SK-N-SH (cell line): ENCODE measurements at regions of chr9 and their contacts with region 1.

Region 1: GRCh38 chr9:34458013-34458958 is at the starts of genes DNAI1 and FAM219A:
- DNase-seq: peak; percentile 99
- H3K4me3 ChIP-seq: peak within 1 kb of the TSS; percentile 76 to 77
- H3K27ac ChIP-seq: peak within 1 kb of the TSS; percentile 61 to 82
- H3K4me1 ChIP-seq: peaks cover 20 to 21% of the 10 kb centered on the region in 2 experiments; a peak in 2 of 4 replicates
- H3K27me3 ChIP-seq: no peaks in the 10 kb centered on the region
- CTCF ChIP-seq: no peak
- EP300 ChIP-seq: no peak
- RAD21 ChIP-seq: no peak
- polyA plus RNA-seq, gene DNAI1: 0.46 and 0.55 TPM in 2 replicates
- polyA plus RNA-seq, gene FAM219A: 15.7 and 18.5 TPM in 2 replicates

Region 2: GRCh38 chr9:34271265-34272006 is 186.8 kb before region 1 on chr9:
- CTCF ChIA-PET with region 1: no interaction called
- POLR2A ChIA-PET with region 1: no interaction called
- DNase-seq: no peak
- H3K4me3 ChIP-seq: no peak overlapping the region
- H3K27ac ChIP-seq: no peak overlapping the region
- H3K4me1 ChIP-seq: peaks cover 0 to 2% of the 10 kb centered on the region in 2 experiments; a peak in 1 of 4 replicates
- H3K27me3 ChIP-seq: no peaks in the 10 kb centered on the region
- CTCF ChIP-seq: no peak
- EP300 ChIP-seq: no peak
- RAD21 ChIP-seq: no peak

Region 3: DNA sequence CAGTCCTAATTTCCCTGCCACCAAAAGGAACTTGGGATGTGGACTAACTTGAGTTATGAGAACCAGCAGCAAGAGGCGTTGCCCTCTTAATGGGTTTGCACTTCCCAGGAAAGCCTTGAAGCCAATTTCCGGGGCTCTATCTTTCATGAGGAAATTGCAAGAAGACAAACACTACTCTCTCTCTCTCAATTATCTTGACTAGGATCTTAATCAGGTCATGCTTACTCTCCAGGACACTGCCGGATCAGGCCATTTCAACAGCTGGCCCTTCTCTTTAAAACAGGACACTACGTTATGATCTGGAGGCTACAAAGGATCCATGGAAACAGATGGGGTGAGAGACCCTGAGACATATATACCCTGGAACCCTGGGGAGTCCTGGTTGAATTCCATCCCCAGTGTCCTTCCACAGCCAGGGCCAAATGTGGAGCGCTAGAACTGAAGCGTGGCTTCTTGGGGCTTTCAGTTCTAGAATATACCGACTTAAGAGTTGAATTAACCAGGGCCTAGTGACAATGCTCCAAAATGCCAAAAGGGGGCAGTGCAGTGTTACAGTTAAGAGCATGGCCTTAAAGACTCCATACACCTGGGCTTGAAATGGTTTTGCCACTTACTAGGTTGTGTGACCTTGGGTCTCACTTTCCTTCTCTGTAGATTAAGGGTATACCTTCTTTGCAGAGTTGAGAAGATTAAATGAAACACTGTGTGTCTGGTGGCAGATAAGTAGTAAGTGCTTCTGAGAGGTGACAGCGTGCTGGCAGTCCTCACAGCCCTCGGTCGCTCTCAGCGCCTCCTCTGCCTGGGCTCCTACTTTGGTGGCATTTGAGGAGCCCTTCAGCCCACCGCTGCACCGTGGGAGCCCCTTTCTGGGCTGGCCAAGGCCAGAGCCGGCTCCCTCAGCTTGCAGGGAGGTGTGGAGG is 21.0 kb before region 1 on chr9:
- CTCF ChIA-PET with region 1: interaction called, 10 read pairs
- POLR2A ChIA-PET with region 1: no interaction called
- DNase-seq: peak; percentile 74
- H3K4me3 ChIP-seq: no peak overlapping the region
- H3K27ac ChIP-seq: peak overlapping the region in 1 of 2 experiments; percentile 59; a peak in 2 of 4 replicates
- H3K4me1 ChIP-seq: peaks cover 12 to 21% of the 10 kb centered on the region in 2 experiments; a peak in 3 of 4 replicates
- H3K27me3 ChIP-seq: no peaks in the 10 kb centered on the region
- CTCF ChIP-seq: peak; percentile 92
- EP300 ChIP-seq: no peak
- RAD21 ChIP-seq: peak; percentile 94

Region 4: DNA sequence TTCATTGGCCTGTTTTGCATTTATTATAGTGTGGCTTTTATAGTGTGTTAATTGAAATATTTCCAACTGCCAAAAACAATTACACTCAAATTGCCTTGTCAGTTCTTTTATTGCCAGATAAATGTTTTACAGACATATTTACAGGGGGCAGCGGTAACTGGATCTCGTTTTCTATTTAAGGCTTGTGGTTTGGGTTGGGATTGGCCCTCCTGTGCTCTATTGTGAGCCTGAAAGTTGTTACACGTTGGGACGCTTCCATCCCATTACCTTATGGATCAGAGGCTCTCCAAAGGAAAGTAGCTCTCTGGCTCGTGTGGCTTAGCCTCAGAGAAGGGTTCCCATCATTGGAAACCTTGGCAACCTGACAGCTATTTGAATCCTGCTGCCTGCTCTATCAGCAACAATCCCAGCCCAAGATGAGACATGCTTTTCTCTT is 21.2 kb after region 1 on chr9:
- CTCF ChIA-PET with region 1: interaction called, 12 read pairs
- POLR2A ChIA-PET with region 1: no interaction called
- DNase-seq: no peak
- H3K4me3 ChIP-seq: no peak overlapping the region
- H3K27ac ChIP-seq: no peak overlapping the region
- H3K4me1 ChIP-seq: no peaks in the 10 kb centered on the region
- H3K27me3 ChIP-seq: peaks cover 6% of the 10 kb centered on the region; the same call in 1 of the 2 replicates
- CTCF ChIP-seq: no peak
- EP300 ChIP-seq: no peak
- RAD21 ChIP-seq: no peak

Region 5: GRCh38 chr9:34802916-34803315 is 344.6 kb after region 1 on chr9:
- CTCF ChIA-PET with region 1: no interaction called
- POLR2A ChIA-PET with region 1: no interaction called
- DNase-seq: no peak
- H3K4me3 ChIP-seq: no peak overlapping the region
- H3K27ac ChIP-seq: no peak overlapping the region
- H3K4me1 ChIP-seq: no peaks in the 10 kb centered on the region
- H3K27me3 ChIP-seq: no peaks in the 10 kb centered on the region
- CTCF ChIP-seq: no peak
- EP300 ChIP-seq: no peak
- RAD21 ChIP-seq: no peak